GM12878 (cell line): ENCODE measurements at regions of chr2 and their contacts with region 1.

Region 1: GRCh38 chr2:230225486-230225885 is at the start of gene SP140:
- DNase-seq: peak; percentile 80
- ATAC-seq: peak; percentile 77
- H3K4me3 ChIP-seq: peak within 1 kb of the TSS; percentile 72
- H3K27ac ChIP-seq: peak within 1 kb of the TSS; percentile 68
- H3K4me1 ChIP-seq: peaks cover 48% of the 10 kb centered on the region
- H3K27me3 ChIP-seq: no peaks in the 10 kb centered on the region
- CTCF ChIP-seq: 0 out of 6 replicates have a peak, but pooled peaks of 1 of the 3 experiments have one; percentile 4
- EP300 ChIP-seq: no peak
- POLR2A ChIP-seq: peak; percentile 93
- RAD21 ChIP-seq: no peak
- polyA plus RNA-seq, gene SP140: 61.7 to 93.9 TPM

Region 2: DNA sequence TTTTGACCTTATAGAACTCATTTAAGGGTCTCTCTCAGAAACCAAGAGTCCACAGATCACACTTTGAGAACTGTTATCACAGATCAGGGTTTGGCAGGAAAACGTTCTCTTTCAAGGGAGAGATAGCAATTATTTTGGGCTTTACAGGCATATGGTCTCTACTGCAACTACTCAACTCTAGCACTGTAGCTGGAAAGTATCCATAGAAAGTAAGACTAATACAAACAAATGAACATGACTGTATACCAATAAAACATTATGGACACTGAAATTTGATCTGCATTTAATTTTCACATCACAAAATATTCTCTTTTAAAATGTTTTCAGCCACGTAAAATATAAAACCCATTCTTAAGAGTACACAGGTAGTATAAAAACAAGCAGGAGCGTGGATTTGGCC is 404.2 kb before region 1 on chr2:
- CTCF ChIA-PET with region 1: no interaction called
- POLR2A ChIA-PET with region 1: no interaction called
- RAD21 ChIA-PET with region 1: no interaction called
- SMC1A ChIA-PET with region 1: no interaction called
- in situ Hi-C with region 1: no loop called
- intact Hi-C with region 1: no loop called
- DNase-seq: no peak
- ATAC-seq: no peak
- H3K4me3 ChIP-seq: peak overlapping the region; percentile 12; the same call in 1 of the 2 replicates
- H3K27ac ChIP-seq: peak overlapping the region; percentile 68; the same call in 1 of the 2 replicates
- H3K4me1 ChIP-seq: peaks cover 20% of the 10 kb centered on the region
- H3K27me3 ChIP-seq: no peaks in the 10 kb centered on the region
- CTCF ChIP-seq: no peak
- EP300 ChIP-seq: no peak
- POLR2A ChIP-seq: no peak
- RAD21 ChIP-seq: no peak

Region 3: DNA sequence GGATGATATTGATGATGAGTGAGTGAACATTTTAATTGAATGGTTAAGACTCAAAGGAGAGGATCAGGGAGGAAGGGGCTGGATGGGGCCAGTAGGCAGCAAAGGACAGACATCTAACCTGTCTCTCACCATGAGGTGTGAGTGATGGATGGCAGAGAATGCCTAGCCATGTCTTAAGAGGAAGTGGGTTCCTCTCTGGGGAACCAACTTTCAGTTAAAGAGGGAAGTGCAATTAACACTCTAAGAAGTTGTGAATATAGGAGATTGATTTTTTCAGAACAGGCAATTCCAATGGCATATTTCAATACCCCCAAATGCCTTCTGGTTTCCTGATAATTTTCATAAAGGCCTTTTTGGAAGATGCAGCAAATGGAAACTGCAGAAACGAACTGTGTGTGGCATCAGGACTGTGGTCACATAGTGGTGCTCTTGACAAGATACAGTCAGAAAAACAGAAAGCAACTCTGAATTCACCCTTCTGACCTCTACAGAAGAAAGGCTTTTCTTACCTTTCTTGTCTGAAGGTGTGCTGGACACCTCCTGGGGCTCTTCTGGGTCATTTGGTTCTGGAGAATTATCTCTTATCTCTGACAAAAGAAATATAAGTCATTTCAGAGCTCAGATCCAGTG is 15.9 kb before region 1 on chr2:
- CTCF ChIA-PET with region 1: interaction called, 6 read pairs
- POLR2A ChIA-PET with region 1: interaction called, 11 read pairs
- RAD21 ChIA-PET with region 1: interaction called, 37 read pairs
- SMC1A ChIA-PET with region 1: interaction called, 121 read pairs
- in situ Hi-C with region 1: no loop called
- intact Hi-C with region 1: no loop called
- DNase-seq: no peak
- ATAC-seq: peak; percentile 76
- H3K4me3 ChIP-seq: no peak overlapping the region
- H3K27ac ChIP-seq: no peak overlapping the region
- H3K4me1 ChIP-seq: peaks cover 40% of the 10 kb centered on the region
- H3K27me3 ChIP-seq: no peaks in the 10 kb centered on the region
- CTCF ChIP-seq: no peak
- EP300 ChIP-seq: peak in 1 of 2 experiments; percentile 84; a peak in 2 of 4 replicates
- POLR2A ChIP-seq: no peak
- RAD21 ChIP-seq: no peak

Region 4: GRCh38 chr2:230268606-230269243 is 43.2 kb after region 1 on chr2:
- CTCF ChIA-PET with region 1: interaction called, 4 read pairs
- POLR2A ChIA-PET with region 1: interaction called, 6 read pairs
- RAD21 ChIA-PET with region 1: interaction called, 4 read pairs
- SMC1A ChIA-PET with region 1: interaction called, 9 read pairs
- in situ Hi-C with region 1: no loop called
- intact Hi-C with region 1: loop called (anchors 2 kb)
- DNase-seq: peak; percentile 36
- ATAC-seq: peak; percentile 59
- H3K4me3 ChIP-seq: no peak overlapping the region
- H3K27ac ChIP-seq: peak overlapping the region; percentile 76
- H3K4me1 ChIP-seq: peaks cover 28% of the 10 kb centered on the region
- H3K27me3 ChIP-seq: no peaks in the 10 kb centered on the region
- CTCF ChIP-seq: no peak
- EP300 ChIP-seq: no peak
- POLR2A ChIP-seq: no peak
- RAD21 ChIP-seq: no peak

Region 5: DNA sequence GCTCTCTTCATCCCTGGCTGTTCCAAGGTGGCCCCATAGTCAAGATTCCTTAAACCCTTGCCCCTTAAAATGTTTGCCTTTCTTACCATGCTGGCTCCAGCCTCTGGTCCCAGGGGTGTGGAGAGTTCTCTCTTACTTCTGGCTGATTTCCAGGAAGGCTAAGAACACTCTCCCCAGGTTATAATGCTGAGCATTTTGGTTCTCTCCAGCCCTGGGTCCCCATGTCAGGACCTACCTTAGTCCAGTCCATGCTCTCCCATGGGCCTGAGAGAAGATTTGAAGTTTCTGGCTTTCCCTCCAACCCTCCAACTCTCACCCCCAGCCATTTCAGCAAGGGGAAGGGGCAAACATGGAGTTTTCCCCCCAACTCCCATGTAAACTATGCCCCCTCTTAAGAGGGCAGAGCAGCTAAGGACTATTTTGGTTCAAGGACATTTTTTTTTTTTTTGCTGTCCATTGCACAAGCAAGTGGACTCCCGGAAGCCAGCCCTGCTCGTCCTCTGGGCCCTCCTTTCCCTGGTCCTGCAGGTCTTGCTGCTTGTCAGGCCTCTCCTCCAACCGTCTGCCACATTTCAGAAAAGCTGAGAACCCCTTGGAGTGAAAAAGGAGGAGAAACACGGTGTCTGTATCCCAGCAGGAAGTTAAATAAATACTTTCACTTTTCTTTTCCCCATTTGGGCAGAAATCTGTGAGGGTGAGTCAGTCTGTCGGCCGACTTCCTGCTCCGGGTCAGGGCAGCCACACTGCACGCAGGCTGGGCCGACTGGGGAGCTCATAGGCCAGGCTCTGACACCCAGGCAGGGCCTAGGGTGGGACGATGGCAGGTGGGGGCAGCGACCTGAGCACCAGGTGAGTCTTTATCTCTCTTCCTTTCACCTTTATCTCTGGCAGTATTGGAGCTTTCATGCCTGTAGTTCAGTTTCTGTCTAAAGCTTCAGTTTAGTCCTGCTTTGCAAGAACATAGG is 101.2 kb after region 1 on chr2 and contains the start of gene SP140L:
- CTCF ChIA-PET with region 1: interaction called, 3 read pairs
- POLR2A ChIA-PET with region 1: interaction called, 6 read pairs
- RAD21 ChIA-PET with region 1: interaction called, 6 read pairs
- SMC1A ChIA-PET with region 1: interaction called, 20 read pairs
- in situ Hi-C with region 1: no loop called
- intact Hi-C with region 1: loop called (anchors 5 kb)
- DNase-seq: peak; percentile 55
- ATAC-seq: peak; percentile 96
- H3K4me3 ChIP-seq: peak within 1 kb of the TSS; percentile 78
- H3K27ac ChIP-seq: peak within 1 kb of the TSS; percentile 96
- H3K4me1 ChIP-seq: no peaks in the 10 kb centered on the region
- H3K27me3 ChIP-seq: no peaks in the 10 kb centered on the region
- CTCF ChIP-seq: no peak
- EP300 ChIP-seq: no peak
- POLR2A ChIP-seq: peak; percentile 81
- RAD21 ChIP-seq: no peak
- polyA plus RNA-seq, gene SP140L: 4.7 to 6.1 TPM

Region 6: GRCh38 chr2:230447455-230448451 is 222.3 kb after region 1 on chr2:
- CTCF ChIA-PET with region 1: no interaction called
- POLR2A ChIA-PET with region 1: no interaction called
- RAD21 ChIA-PET with region 1: no interaction called
- SMC1A ChIA-PET with region 1: interaction called, 7 read pairs
- in situ Hi-C with region 1: no loop called
- intact Hi-C with region 1: loop called (anchors 2 kb)
- DNase-seq: peak; percentile 84
- ATAC-seq: peak; percentile 87
- H3K4me3 ChIP-seq: 0 out of 2 replicates have a peak overlapping the region, but pooled peaks have one; percentile 13
- H3K27ac ChIP-seq: peak overlapping the region; percentile 89
- H3K4me1 ChIP-seq: peaks cover 53% of the 10 kb centered on the region
- H3K27me3 ChIP-seq: no peaks in the 10 kb centered on the region
- CTCF ChIP-seq: no peak
- EP300 ChIP-seq: peak; percentile 80 to 84; a peak in 3 of 4 replicates
- POLR2A ChIP-seq: no peak
- RAD21 ChIP-seq: no peak

Region 7: GRCh38 chr2:230589497-230590015 is 364.1 kb after region 1 on chr2:
- CTCF ChIA-PET with region 1: interaction called, 3 read pairs
- POLR2A ChIA-PET with region 1: interaction called, 3 read pairs
- RAD21 ChIA-PET with region 1: interaction called, 3 read pairs
- SMC1A ChIA-PET with region 1: interaction called, 3 read pairs
- in situ Hi-C with region 1: no loop called
- intact Hi-C with region 1: loop called (anchors 5 kb)
- DNase-seq: peak; percentile 98
- ATAC-seq: peak; percentile 90
- H3K4me3 ChIP-seq: no peak overlapping the region
- H3K27ac ChIP-seq: peak overlapping the region; percentile 96
- H3K4me1 ChIP-seq: peaks cover 62% of the 10 kb centered on the region
- H3K27me3 ChIP-seq: no peaks in the 10 kb centered on the region
- CTCF ChIP-seq: 0 out of 6 replicates have a peak, but pooled peaks of 1 of the 3 experiments have one; percentile 3
- EP300 ChIP-seq: peak; percentile 91 to 98
- POLR2A ChIP-seq: peak; percentile 77
- RAD21 ChIP-seq: peak; percentile 38; the same call in 1 of the 2 replicates

Region 8: GRCh38 chr2:230643576-230644291 is 418.2 kb after region 1 on chr2:
- CTCF ChIA-PET with region 1: no interaction called
- POLR2A ChIA-PET with region 1: interaction called, 11 read pairs
- RAD21 ChIA-PET with region 1: no interaction called
- SMC1A ChIA-PET with region 1: no interaction called
- in situ Hi-C with region 1: no loop called
- intact Hi-C with region 1: no loop called
- DNase-seq: no peak
- ATAC-seq: peak; percentile 88
- H3K4me3 ChIP-seq: no peak overlapping the region
- H3K27ac ChIP-seq: peak overlapping the region; percentile 60
- H3K4me1 ChIP-seq: peaks cover 18% of the 10 kb centered on the region
- H3K27me3 ChIP-seq: no peaks in the 10 kb centered on the region
- CTCF ChIP-seq: no peak
- EP300 ChIP-seq: peak in 1 of 2 experiments; percentile 26; a peak in 1 of 4 replicates
- POLR2A ChIP-seq: no peak
- RAD21 ChIP-seq: no peak